Activated B cell treated with CpG ODN at 0.5 μM for 24 hours (primary cell): ENCODE measurements at regions of chr7 and their contacts with region 1.

Region 1: GRCh38 chr7:40057292-40057691 is 77.1 kb downstream of the MPLKIP start:
- DNase-seq: no peak
- ATAC-seq: no peak
- H3K4me3 Mint-ChIP-seq: no peak overlapping the region
- H3K27ac Mint-ChIP-seq: peak overlapping the region; percentile 54
- H3K4me1 Mint-ChIP-seq: peaks cover 2% of the 10 kb centered on the region
- H3K27me3 Mint-ChIP-seq: no peaks in the 10 kb centered on the region
- CTCF ChIP-seq: no peak

Region 2: DNA sequence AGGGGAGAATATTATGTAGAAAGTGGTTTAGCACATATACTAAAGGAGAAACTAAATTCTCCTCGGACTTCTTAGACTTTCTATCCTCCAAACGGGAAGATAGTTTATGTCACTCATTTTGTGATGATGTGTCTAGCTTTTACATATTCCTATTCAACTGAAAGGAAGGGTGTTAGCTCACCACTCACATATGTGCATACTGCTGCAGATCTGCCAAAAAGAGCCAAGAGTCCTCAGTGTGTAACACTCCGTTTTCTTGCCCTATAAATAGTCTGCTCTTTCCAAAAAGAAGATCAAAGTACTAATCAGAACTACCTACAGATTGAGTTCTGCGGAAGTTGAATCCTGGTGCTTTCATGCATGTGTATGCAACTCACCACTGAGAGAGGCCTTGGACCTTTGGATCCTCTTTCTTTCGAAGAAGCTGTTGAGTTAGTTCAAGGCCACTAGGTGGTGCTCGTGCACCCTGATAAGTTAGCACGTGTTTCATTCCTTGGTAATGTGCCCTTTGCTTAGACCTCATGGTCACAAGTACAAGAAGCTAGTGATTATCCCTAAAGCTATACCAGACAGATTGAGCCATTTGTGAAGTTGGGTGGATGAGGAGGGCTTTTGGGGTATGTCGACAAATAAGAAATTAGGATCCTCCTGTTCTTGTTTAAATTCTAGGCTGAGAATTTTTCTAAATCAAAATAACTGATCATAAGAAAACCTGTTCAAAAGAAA is 477.0 kb before region 1 on chr7:
- CTCF ChIA-PET with region 1: interaction called, 30 read pairs
- POLR2A ChIA-PET with region 1: no interaction called
- intact Hi-C with region 1: loop called (anchors 1 kb)
- DNase-seq: peak; percentile 39
- ATAC-seq: peak; percentile 97
- H3K4me3 Mint-ChIP-seq: no peak overlapping the region
- H3K27ac Mint-ChIP-seq: no peak overlapping the region
- H3K4me1 Mint-ChIP-seq: peaks cover 3% of the 10 kb centered on the region
- H3K27me3 Mint-ChIP-seq: no peaks in the 10 kb centered on the region
- CTCF ChIP-seq: no peak

Region 3: GRCh38 chr7:39958038-39958437 is 99.3 kb before region 1 on chr7:
- CTCF ChIA-PET with region 1: interaction called, 78 read pairs
- POLR2A ChIA-PET with region 1: no interaction called
- intact Hi-C with region 1: no loop called
- DNase-seq: no peak
- ATAC-seq: no peak
- H3K4me3 Mint-ChIP-seq: peak overlapping the region; percentile 35
- H3K27ac Mint-ChIP-seq: peak overlapping the region; percentile 20
- H3K4me1 Mint-ChIP-seq: peaks cover 78% of the 10 kb centered on the region
- H3K27me3 Mint-ChIP-seq: no peaks in the 10 kb centered on the region
- CTCF ChIP-seq: no peak

Region 4: DNA sequence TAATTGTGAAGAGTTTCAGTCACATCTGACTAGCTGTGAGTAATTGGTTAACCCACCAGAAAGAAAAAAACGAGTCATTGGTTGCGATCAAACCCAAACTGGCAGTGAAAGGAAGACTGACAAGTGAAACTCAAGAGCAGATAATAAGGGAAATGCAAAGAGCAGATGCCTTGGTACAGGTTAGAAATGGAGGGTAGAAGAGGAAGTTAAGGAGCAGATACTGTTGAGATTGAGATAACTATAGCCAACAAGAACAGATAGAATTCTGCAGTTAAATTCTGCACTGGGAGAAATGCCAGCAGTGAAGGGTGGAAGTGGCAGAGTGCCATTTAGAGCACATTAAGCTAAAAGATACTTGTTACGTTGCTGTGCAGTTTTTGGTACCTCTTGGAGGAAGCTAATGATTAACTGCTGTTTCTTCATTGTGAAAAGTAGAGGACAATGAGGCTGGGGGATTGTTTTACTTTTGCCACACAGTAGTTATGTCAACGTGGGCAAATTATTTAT is 41.4 kb before region 1 on chr7:
- CTCF ChIA-PET with region 1: interaction called, 6 read pairs
- POLR2A ChIA-PET with region 1: interaction called, 11 read pairs
- intact Hi-C with region 1: no loop called
- DNase-seq: no peak
- ATAC-seq: peak; percentile 94
- H3K4me3 Mint-ChIP-seq: no peak overlapping the region
- H3K27ac Mint-ChIP-seq: peak overlapping the region; percentile 72
- H3K4me1 Mint-ChIP-seq: peaks cover 18% of the 10 kb centered on the region
- H3K27me3 Mint-ChIP-seq: no peaks in the 10 kb centered on the region
- CTCF ChIP-seq: no peak